ENCODE measurements at regions of chr11 and their contacts with region 1.

Region 1: GRCh38 chr11:119284344-119285157 is 32.4 kb downstream of the MCAM start:
- DNase-seq: peak; percentile 27
- H3K4me3 Mint-ChIP-seq: no peak overlapping the region
- H3K27ac Mint-ChIP-seq: peak overlapping the region; percentile 12
- H3K4me1 Mint-ChIP-seq: peaks cover 23% of the 10 kb centered on the region
- H3K27me3 Mint-ChIP-seq: no peaks in the 10 kb centered on the region

Region 2: DNA sequence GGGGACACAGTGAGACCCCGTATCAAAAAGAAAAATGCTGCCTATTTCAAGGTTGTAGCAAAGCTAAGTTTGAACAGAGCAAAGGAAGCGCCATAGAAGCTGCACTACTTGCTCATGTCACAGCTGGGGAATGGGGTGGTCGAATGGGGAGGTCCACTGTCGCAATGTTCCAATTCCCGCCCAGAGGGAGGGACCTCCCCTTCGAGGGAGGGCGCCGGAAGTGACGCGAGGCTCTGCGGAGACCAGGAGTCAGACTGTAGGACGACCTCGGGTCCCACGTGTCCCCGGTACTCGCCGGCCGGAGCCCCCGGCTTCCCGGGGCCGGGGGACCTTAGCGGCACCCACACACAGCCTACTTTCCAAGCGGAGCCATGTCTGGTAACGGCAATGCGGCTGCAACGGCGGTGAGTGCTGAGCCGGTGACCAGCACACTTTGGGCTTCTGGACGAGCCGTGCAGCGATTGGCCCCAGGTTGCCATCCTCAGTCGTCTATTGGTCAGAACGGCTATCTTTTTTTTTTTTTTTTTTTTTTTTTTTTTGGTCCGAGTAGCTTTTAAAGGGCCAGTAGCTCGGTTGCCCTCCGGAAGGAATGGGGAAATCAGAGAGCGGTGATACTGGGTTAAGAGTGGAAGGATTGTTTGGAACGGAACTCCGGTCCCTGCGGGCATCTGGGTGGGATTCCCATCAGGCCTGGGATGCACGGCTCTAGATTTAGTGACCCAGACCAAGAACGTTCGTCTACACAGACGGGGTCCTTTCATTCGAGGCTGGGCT is 199.7 kb before region 1 on chr11 and contains the start of gene HMBS:
- CTCF ChIA-PET with region 1: no interaction called
- DNase-seq: peak; percentile 91
- H3K4me3 Mint-ChIP-seq: peak within 1 kb of the TSS; percentile 98
- H3K27ac Mint-ChIP-seq: peak within 1 kb of the TSS; percentile 91
- H3K4me1 Mint-ChIP-seq: peaks cover 45% of the 10 kb centered on the region
- H3K27me3 Mint-ChIP-seq: no peaks in the 10 kb centered on the region

Region 3: DNA sequence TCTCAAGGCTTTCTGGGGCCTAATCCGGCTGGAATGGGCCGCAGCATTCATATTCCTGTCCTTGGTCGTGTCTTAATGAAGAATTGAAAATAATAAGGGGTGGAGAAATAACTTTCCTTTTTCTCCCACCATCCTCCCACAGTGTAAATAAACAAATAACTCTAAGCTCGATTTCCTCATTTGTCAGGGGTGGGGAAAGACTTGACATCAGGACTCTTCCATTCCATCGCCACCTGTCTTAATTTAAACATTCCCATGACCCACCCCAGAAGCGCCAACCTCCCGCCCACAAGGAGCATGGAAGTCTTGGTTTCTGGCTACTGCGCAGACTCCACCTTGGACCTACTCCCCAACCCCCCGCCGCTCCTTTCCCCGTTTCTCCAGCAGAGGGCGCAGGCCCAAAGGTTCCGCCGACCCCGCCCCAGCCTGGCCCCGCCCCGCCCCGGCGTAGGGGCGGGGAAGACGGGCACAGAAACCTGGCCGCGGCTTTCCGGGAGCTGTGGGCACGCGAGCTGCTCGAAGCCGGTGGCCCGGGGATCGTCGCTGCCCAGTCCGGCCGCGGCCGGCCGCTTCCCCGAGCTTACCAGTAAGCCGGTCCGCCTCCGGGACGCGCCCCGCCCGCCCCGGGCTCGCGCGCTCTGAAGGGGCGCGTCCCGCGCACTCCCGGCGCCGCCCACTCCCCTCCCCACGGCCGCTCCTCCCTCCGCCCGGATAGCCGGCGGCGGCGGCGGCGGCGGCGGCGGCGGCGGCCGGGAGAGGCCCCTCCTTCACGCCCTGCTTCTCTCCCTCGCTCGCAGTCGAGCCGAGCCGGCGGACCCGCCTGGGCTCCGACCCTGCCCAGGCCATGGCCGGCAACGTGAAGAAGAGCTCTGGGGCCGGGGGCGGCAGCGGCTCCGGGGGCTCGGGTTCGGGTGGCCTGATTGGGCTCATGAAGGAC is 78.7 kb before region 1 on chr11 and contains the start of gene CBL:
- CTCF ChIA-PET with region 1: interaction called, 27 read pairs
- DNase-seq: peak; percentile 97
- H3K4me3 Mint-ChIP-seq: peak within 1 kb of the TSS; percentile 86
- H3K27ac Mint-ChIP-seq: peak within 1 kb of the TSS; percentile 88
- H3K4me1 Mint-ChIP-seq: peaks cover 31% of the 10 kb centered on the region
- H3K27me3 Mint-ChIP-seq: peaks cover 4% of the 10 kb centered on the region

Region 4: GRCh38 chr11:119343726-119344125 is 59.2 kb after region 1 on chr11:
- CTCF ChIA-PET with region 1: no interaction called
- DNase-seq: no peak
- H3K4me3 Mint-ChIP-seq: no peak overlapping the region
- H3K27ac Mint-ChIP-seq: no peak overlapping the region
- H3K4me1 Mint-ChIP-seq: peaks cover 14% of the 10 kb centered on the region
- H3K27me3 Mint-ChIP-seq: peaks cover 94% of the 10 kb centered on the region